ENCODE measurements at regions of chr19 and their contacts with region 1.

Region 1: GRCh38 chr19:47713046-47714021 is at the start of gene EHD2:
- DNase-seq: no peak
- H3K4me3 ChIP-seq: peak within 1 kb of the TSS; percentile 71 to 81
- H3K27ac ChIP-seq: peak within 1 kb of the TSS; percentile 97
- H3K4me1 ChIP-seq: peaks cover 44% of the 10 kb centered on the region
- H3K27me3 ChIP-seq: no peaks in the 10 kb centered on the region
- CTCF ChIP-seq: peak; percentile 96 to 97 (median 97)
- POLR2A ChIP-seq: peak in 1 of 2 donors; percentile 93
- total RNA-seq, gene EHD2: 125 TPM

Region 2: DNA sequence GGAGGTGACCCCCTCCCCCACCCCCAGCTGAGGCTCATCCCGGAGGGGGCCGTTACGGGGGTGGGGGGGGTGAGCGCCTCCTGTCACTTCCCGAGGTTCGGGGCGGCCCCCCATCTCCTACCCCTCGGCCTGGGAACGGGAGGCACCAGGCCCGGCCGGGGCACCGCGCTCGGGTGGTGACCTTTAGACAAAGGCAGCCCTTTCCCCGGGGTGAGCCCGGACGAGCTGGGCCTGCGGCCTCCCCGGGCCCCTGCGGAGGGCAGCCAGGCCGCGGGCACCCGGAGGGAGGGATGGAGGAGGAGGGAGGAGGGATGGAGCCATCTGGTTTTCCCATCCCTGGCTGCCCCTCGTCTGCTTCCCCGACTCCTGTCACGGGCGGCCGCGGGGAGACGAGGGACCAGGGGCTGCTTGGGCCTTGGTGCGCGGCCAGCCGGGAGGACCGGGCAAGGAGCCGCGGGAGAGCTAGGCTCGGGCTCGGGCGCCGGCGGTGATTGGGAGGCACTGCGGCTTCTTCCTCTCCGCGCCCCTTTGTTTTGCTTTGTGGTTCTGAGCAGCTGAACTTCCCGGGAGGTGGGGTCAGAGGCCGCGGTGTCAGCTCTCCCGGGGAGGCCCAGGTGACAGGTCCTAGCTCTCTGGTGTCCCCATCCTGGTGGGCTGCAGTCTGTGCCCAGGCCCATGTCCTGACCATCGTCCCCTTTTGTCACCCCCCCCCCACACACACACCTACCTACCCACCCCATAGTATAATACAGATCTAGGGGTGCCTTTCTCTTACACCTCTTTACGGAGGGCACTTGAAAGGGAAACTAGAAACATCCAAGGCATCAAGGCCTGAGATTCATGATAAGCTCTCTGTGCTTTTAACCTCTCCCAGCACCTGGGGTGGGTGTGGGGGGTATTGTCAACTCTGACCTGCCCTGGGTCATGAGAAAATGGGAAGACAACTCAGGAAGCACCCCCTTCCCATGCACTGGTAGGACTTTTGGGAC is 103.1 kb before region 1 on chr19:
- intact Hi-C with region 1: no loop called
- DNase-seq: no peak
- H3K4me3 ChIP-seq: peak overlapping the region; percentile 69 to 99
- H3K27ac ChIP-seq: peak overlapping the region; percentile 90
- H3K4me1 ChIP-seq: peaks cover 58% of the 10 kb centered on the region
- H3K27me3 ChIP-seq: no peaks in the 10 kb centered on the region
- CTCF ChIP-seq: no peak
- POLR2A ChIP-seq: no peak

Region 3: GRCh38 chr19:47644762-47645482 is 68.4 kb before region 1 on chr19:
- intact Hi-C with region 1: no loop called
- DNase-seq: no peak
- H3K4me3 ChIP-seq: no peak overlapping the region
- H3K27ac ChIP-seq: no peak overlapping the region
- H3K4me1 ChIP-seq: peaks cover 13% of the 10 kb centered on the region
- H3K27me3 ChIP-seq: no peaks in the 10 kb centered on the region
- CTCF ChIP-seq: no peak
- POLR2A ChIP-seq: no peak

Region 4: DNA sequence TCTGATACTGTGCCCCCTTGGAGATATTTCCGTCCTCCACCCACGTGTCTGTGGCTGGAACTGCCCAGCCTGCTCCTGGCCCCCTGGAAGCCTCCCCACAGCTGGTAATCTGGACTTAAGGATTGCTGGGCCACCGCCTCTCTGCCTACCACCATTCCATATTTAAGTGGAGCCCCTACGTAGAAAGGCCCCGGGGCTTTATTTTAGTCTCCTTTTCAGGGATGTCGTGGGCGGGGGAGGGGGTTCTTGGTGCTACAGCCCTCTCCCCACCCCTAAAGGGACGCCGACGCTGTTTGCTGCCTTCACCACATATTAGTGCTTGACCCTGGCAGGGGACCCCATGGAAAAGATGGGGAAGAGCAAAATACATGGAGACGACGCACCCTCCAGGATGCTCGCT is 29.3 kb after region 1 on chr19:
- intact Hi-C with region 1: loop called (anchors 1 kb)
- DNase-seq: no peak
- H3K4me3 ChIP-seq: peak overlapping the region; percentile 35 to 38
- H3K27ac ChIP-seq: peak overlapping the region; percentile 99
- H3K4me1 ChIP-seq: peaks cover 41% of the 10 kb centered on the region
- H3K27me3 ChIP-seq: no peaks in the 10 kb centered on the region
- CTCF ChIP-seq: no peak
- POLR2A ChIP-seq: no peak

Region 5: DNA sequence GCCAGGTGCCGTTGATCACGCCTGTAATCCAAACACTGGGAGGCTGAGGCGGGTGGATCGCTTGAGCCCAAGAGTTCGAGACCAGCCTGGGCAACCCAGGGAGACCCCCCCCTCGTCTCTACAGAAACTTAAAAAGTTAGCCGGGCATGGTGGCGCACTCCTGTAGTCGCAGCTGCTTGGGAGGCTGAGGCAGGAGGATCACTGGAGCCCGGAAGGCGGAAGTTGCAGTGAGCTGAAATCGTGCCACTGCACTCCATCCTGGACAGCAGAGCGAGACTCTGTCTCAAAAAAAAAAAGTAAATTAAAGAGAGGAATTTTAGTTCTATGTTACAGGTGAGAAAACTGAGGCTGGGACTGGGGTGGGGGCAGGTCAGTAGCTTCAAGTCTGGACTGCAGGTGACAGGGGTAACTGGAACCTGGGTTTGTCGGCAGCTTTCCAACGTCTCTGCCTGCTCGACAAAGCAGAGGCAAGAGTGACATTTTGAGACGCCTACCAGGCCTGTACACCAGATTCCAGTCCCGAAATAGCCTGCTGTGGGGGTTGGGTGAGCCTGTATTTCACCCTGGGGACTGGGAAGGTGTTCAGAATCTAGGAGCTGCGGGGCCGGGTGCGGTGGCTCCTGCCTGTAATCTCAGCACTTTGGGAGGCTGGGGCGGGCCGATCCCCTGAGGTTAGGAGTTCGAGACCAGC is 66.3 kb after region 1 on chr19:
- intact Hi-C with region 1: loop called (anchors 10 kb)
- DNase-seq: no peak
- H3K4me3 ChIP-seq: peak overlapping the region; percentile 86
- H3K27ac ChIP-seq: peak overlapping the region; percentile 99
- H3K4me1 ChIP-seq: peaks cover 47% of the 10 kb centered on the region
- H3K27me3 ChIP-seq: no peaks in the 10 kb centered on the region
- CTCF ChIP-seq: no peak
- POLR2A ChIP-seq: no peak

Measured in vagina (tissue), 2 donors.